Activated B cell treated with CpG ODN at 0.5 μM for 24 hours (primary cell): ENCODE measurements at regions of chr1 and their contacts with region 1.

Region 1: GRCh38 chr1:100941098-100941527 is 45.2 kb downstream of the SLC30A7 start:
- DNase-seq: no peak
- ATAC-seq: no peak
- H3K4me3 Mint-ChIP-seq: no peak overlapping the region
- H3K27ac Mint-ChIP-seq: no peak overlapping the region
- H3K4me1 Mint-ChIP-seq: peaks cover 38% of the 10 kb centered on the region
- H3K27me3 Mint-ChIP-seq: no peaks in the 10 kb centered on the region
- CTCF ChIP-seq: no peak

Region 2: DNA sequence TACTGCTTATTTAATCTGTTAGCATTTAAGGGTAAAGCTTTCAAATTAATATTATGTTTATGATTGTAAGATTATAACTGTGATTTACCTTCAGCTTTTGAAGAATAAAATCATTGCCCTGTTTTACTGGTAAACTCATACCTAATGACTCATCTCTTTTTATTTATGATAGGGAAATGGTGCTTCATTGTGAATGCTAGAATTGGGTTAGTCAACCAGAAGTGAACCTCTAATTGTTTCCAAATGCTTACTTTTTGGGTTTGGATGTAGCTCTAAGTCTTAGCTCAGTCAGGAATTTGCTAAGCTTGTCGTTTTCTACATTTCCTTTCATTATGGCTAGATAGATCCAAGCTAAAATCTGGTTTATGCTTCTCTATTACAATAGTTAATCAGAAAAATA is 14.2 kb after region 1 on chr1:
- CTCF ChIA-PET with region 1: no interaction called
- POLR2A ChIA-PET with region 1: no interaction called
- intact Hi-C with region 1: loop called (anchors 2 kb)
- DNase-seq: no peak
- ATAC-seq: no peak
- H3K4me3 Mint-ChIP-seq: no peak overlapping the region
- H3K27ac Mint-ChIP-seq: no peak overlapping the region
- H3K4me1 Mint-ChIP-seq: peaks cover 26% of the 10 kb centered on the region
- H3K27me3 Mint-ChIP-seq: no peaks in the 10 kb centered on the region
- CTCF ChIP-seq: no peak